ENCODE measurements at regions of chr6 and their contacts with region 1.

Region 1: GRCh38 chr6:158972241-158973233 is 27.5 kb downstream of the RSPH3 start:
- DNase-seq: no peak
- ATAC-seq: peak; percentile 56 to 70 (median 62)
- H3K4me3 ChIP-seq: no peak overlapping the region
- H3K27ac ChIP-seq: no peak overlapping the region
- H3K4me1 ChIP-seq: no peaks in the 10 kb centered on the region
- H3K27me3 ChIP-seq: no peaks in the 10 kb centered on the region
- CTCF ChIP-seq: peak; percentile 52 to 61 (median 58)
- POLR2A ChIP-seq: no peak

Region 2: DNA sequence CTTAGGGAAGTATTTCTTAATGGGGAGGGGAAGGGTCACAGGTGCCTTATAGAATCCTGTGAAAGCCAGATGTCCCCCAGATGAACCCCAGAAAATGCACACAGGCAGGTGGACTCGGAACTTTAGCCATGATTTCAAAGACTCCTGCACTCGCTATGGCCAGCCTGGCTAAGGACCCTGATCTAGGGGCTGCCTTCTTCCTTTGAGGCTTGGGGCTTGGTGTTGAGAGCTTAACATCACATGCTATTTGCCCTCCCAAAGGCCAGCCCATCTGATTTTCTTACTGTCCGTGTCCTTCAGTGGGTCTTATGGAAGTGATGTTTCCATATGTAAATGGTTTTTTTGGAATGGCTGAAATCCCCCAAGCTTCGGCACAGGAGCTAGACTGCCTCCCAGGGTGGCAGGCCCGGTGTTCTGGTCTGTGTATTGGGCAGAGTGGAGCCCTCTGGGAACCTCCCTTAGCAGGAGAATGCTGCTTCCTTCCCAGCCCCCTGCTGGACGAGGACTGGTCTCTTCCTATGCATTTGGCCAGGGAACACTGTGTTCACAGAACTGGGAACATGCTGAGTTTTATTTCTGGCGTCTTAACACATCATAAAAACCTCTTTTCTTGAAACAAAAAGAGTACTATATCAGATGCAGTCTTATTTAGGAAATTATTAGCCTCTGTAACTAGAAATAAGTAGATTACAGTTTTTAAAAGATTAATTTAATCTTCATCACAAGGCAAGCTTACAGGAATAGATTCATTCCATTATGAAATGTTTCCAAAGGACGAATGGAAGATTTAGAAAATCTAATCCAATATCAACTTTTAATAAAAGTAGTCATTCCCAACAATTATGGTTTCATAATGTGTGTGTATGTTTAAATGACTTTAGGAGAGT is 266.2 kb before region 1 on chr6:
- intact Hi-C with region 1: loop called in 1 of 2 experiments (anchors 5 kb)
- DNase-seq: peak in 2 of 3 donors; percentile 24 to 45
- ATAC-seq: peak; percentile 20 to 64 (median 40)
- H3K4me3 ChIP-seq: no peak overlapping the region
- H3K27ac ChIP-seq: peak overlapping the region in 1 of 3 donors; percentile 34
- H3K4me1 ChIP-seq: peaks cover 0 to 10% (median 4%) of the 10 kb centered on the region in 4 donors
- H3K27me3 ChIP-seq: no peaks in the 10 kb centered on the region
- CTCF ChIP-seq: peak; percentile 26 to 45 (median 36)
- POLR2A ChIP-seq: no peak

Measured in right lobe of liver (tissue), 6 donors.